Activated CD4-positive, alpha-beta memory T cell treated with anti-CD3 and anti-CD28 coated beads for 36 hours (primary cell): ENCODE measurements at regions of chr19 and their contacts with region 1.

Region 1: GRCh38 chr19:39846176-39846677 is at the start of gene FBL:
- DNase-seq: peak; percentile 98
- H3K4me3 Mint-ChIP-seq: peak within 1 kb of the TSS; percentile 94
- H3K27ac Mint-ChIP-seq: peak within 1 kb of the TSS; percentile 90
- H3K4me1 Mint-ChIP-seq: peaks cover 45% of the 10 kb centered on the region
- H3K27me3 Mint-ChIP-seq: no peaks in the 10 kb centered on the region
- total RNA-seq, gene FBL: 579 to 589 TPM

Region 2: DNA sequence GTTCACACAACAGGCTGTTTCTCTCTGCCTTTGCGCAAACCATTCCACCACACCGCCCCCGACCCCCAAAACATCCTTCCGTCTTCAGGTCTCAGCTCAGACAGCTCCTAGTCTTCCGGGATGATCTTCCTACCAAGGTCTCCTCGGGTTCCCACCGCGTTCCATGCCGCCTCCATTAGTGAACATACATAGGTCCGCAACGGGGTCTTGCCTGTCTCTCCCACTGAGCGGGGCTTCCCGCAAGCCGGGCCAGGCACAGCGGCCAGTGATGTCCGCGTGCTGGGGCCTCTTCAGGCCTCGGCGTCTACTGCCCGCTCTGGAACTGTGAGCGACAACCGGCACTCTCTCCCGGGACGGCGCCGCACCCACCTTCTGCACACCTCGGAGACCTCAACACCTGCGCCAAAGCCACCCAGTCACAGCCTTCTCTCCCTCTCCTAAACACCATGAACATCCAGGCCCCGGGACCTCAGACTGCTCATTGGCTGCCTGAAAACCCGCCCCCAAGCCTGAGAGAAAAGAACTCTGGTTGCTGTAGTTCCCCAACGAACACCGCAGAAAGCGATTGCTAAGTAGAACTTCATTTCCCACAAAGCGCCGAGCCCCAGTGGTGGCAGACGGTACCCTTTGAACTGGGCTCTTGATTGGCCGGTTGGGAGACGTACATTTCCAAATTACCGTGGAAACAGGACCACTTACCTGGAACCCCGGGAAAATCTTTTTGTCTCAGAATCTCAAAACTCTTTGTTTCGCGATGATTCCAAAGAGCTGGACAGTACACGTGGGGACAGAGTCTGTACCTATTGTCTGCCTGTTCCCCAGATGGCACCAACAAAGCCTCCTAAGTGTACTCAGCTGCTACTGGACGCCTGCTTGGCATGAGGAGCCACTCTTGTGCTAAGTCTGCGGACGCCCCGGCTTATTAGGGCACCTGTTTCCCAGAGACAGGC is 21.8 kb before region 1 on chr19:
- CTCF ChIA-PET with region 1: interaction called, 11 read pairs
- POLR2A ChIA-PET with region 1: interaction called, 5 read pairs
- intact Hi-C with region 1: no loop called
- DNase-seq: peak; percentile 94
- H3K4me3 Mint-ChIP-seq: no peak overlapping the region
- H3K27ac Mint-ChIP-seq: no peak overlapping the region
- H3K4me1 Mint-ChIP-seq: peaks cover 8% of the 10 kb centered on the region
- H3K27me3 Mint-ChIP-seq: no peaks in the 10 kb centered on the region

Region 3: DNA sequence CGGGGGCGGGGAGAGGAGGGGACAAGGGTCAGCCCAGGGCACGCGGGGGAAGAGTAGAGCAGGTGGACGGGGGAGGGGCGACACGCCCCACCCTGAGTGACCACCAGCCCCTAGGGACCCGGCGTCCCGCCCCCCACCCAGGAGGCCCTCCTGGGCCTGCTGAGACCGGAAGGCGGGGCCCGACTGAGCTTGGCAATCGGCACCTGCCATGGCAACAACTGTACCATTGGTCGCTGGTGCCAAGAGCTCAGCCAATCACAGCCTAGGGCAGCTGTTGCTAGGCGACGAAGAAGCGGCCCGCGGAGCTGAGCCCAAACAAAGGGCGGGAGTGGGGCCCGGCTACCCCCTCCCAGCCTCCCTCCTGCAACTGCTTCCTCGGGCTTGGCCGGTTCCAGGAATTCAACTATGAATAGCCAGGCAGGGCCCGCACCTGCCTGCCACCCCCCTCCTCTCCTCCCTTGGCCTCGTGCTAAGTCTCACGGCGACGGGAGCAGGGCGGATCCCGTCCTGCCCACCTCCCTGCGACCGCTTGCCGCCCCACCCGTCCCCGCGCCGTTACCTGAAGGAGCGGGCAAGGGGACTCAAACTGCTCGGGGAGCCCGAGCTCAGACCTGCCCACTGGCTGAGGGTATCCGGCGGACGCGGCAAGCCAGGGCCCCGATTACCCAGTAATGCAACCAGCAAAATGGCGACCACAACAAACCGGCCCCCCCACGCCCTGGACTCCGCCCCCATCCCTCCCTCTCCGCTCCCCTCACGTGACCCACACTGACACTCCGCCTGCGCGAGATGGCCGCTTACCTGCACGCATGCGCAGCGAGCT is 12.6 kb before region 1 on chr19 and contains the start of gene DYRK1B:
- CTCF ChIA-PET with region 1: interaction called, 56 read pairs
- POLR2A ChIA-PET with region 1: interaction called, 20 read pairs
- intact Hi-C with region 1: loop called (anchors 1 kb)
- DNase-seq: peak; percentile 98
- H3K4me3 Mint-ChIP-seq: peak within 1 kb of the TSS; percentile 58
- H3K27ac Mint-ChIP-seq: peak within 1 kb of the TSS; percentile 74
- H3K4me1 Mint-ChIP-seq: peaks cover 26% of the 10 kb centered on the region
- H3K27me3 Mint-ChIP-seq: no peaks in the 10 kb centered on the region
- total RNA-seq, gene DYRK1B: 4.5 to 4.8 TPM